ENCODE measurements at regions of chr11 and their contacts with region 1.

Region 1: DNA sequence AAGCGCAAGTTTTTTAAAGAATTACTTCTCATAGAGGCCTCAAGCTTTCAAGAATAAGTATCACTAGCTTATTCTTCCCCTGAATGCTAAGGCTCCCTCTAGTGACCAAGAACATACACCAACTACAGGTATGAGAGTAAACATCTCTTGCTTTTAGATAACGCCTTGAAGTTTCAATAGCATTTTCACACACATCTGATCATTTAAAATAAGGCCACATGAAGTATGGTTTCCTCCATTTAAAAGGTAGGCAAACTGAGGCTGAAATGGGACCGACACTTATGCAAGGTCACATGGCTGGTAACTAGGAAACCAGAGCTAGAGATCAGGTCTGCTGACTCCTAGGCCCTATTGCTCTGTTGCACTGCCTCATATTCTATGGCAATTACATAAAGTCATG is 66.5 kb downstream of the CCDC34 start:
- H3K4me3 ChIP-seq: no peak overlapping the region
- H3K27ac ChIP-seq: no peak overlapping the region
- H3K4me1 ChIP-seq: no peaks in the 10 kb centered on the region
- CTCF ChIP-seq: no peak

Region 2: GRCh38 chr11:27183672-27184457 is 112.6 kb before region 1 on chr11:
- CTCF ChIA-PET with region 1: interaction called, 54 read pairs
- POLR2A ChIA-PET with region 1: interaction called, 4 read pairs
- H3K4me3 ChIP-seq: no peak overlapping the region
- H3K27ac ChIP-seq: no peak overlapping the region
- H3K4me1 ChIP-seq: no peaks in the 10 kb centered on the region
- CTCF ChIP-seq: no peak

Region 3: GRCh38 chr11:27201454-27202236 is 94.9 kb before region 1 on chr11:
- CTCF ChIA-PET with region 1: interaction called, 15 read pairs
- POLR2A ChIA-PET with region 1: no interaction called
- H3K4me3 ChIP-seq: no peak overlapping the region
- H3K27ac ChIP-seq: peak overlapping the region; percentile 93
- H3K4me1 ChIP-seq: peaks cover 16% of the 10 kb centered on the region
- CTCF ChIP-seq: no peak

Region 4: DNA sequence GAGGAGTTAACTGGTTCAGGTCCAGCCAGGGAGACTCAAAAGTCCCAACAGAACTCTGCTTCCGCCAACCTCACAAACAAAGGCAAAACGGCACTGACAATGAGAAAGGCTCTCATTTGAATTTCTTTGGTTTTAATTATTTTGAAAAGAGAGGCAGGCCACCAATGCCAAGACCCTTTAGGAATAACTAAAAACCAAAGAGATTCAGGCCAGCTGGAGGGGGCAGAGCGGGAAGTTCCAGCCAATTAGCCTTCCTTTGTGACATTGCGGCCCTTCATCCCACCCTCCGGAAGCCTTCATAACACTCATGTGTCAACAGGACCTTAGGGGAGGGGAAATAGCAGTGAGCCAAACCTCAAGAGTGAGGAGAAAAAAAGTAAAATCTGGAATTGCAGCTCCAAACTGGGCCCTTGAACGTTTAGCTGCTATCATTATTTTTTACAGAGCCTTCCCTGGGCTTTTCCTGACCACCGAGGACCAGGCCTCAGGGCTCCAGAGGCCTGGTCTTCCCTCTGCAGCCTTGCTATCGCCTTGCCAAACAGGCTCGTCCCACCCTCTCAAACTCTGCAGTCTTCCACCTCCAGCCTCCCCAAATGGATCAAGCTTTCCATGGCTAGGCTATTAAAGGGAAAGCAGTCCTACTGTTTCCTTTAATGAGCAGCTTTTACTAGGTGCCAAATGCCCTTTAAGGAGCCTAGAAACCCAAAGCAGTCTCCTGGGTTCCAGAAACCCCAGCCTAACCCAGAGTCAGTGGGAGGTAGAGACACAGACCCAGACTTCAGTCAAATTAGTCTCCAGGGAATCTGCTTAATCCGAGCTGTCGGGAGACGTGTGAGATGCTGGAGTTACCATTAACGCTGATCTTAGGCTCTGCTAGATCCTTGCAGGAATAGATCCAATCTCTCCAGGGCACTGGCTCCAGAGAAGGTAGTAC is 47.7 kb before region 1 on chr11:
- CTCF ChIA-PET with region 1: interaction called, 11 read pairs
- POLR2A ChIA-PET with region 1: no interaction called
- H3K4me3 ChIP-seq: no peak overlapping the region
- H3K27ac ChIP-seq: no peak overlapping the region
- H3K4me1 ChIP-seq: no peaks in the 10 kb centered on the region
- CTCF ChIP-seq: no peak

Region 5: DNA sequence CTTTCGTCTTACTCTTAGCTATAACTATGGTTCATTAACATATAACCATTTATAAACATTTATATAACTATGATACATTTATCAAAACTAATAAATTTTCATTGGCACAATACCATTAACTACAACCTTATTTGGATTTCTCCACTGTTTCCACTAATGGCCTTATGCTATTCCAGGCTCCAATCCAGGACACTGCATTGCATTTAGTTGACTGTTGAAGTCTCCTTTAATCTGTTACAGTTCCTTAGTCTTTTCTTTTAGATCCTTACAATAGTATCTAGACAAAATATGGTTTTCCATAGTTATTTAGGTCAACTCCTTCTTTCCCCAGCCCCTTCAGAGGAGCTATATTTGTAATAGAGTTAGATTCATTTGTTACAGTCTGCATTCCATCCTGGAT is 19.3 kb after region 1 on chr11:
- CTCF ChIA-PET with region 1: interaction called, 13 read pairs
- POLR2A ChIA-PET with region 1: no interaction called
- H3K4me3 ChIP-seq: no peak overlapping the region
- H3K27ac ChIP-seq: no peak overlapping the region
- H3K4me1 ChIP-seq: no peaks in the 10 kb centered on the region
- CTCF ChIP-seq: no peak

Region 6: DNA sequence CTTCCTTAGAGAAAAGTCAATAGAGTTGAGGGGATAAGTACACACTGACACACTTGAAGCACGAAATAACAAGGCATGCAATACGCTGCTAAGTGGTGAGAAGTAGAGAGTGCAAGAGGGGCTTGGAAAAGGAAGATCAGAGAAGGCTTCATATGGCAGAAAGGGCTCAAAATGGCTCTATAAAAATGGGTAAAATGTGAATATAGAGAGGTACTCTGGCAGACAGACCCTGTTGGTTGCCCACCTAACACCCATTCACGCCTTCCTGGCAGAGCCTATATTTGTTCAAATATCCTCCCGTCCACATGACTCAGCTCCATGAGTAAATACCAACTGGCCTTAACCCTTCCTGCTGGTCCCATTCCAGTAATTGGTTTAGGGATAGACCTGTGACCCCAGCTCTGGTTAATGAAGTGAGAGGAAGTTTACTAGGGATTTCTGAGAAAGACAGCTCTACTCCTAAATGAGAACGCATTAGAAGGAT is 105.4 kb after region 1 on chr11:
- CTCF ChIA-PET with region 1: no interaction called
- POLR2A ChIA-PET with region 1: no interaction called
- H3K4me3 ChIP-seq: no peak overlapping the region
- H3K27ac ChIP-seq: no peak overlapping the region
- H3K4me1 ChIP-seq: 0 out of 2 replicates have a peak, but pooled peaks cover 3% of the 10 kb centered on the region
- CTCF ChIP-seq: no peak

Region 7: DNA sequence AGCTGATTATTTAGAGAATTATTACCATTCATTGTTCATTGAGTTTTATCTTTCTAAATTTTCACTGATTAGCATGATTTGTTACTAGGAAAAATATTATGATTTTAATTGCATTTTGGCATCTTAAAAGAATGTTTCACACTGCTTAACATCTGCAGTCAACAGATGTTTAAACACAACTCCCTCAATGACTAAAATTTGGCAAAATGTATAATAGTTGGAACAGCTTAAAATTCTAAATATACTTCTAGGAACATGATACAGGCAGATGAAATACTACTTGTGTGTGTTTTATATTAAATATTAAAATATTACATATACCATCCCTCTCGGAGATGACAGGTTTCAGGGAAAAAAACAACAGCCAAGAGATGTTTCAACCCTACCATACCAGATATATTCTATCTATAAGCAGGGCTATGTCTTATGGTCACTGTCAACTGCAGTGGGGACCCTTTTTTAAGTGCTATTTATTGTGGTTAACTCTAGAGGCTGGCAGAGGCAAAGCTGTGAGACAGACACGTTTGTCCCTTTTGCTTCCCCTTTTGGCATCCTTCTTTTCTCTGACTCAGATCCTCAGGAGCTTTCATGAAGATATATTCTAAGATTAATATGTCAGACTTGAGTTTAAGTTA is 321.9 kb after region 1 on chr11:
- CTCF ChIA-PET with region 1: no interaction called
- POLR2A ChIA-PET with region 1: no interaction called
- H3K4me3 ChIP-seq: no peak overlapping the region
- H3K27ac ChIP-seq: no peak overlapping the region
- H3K4me1 ChIP-seq: no peaks in the 10 kb centered on the region
- CTCF ChIP-seq: no peak

Measured in HEK293 (cell line).